GM12878 (cell line): ENCODE measurements at regions of chr4 and their contacts with region 1.

Region 1: DNA sequence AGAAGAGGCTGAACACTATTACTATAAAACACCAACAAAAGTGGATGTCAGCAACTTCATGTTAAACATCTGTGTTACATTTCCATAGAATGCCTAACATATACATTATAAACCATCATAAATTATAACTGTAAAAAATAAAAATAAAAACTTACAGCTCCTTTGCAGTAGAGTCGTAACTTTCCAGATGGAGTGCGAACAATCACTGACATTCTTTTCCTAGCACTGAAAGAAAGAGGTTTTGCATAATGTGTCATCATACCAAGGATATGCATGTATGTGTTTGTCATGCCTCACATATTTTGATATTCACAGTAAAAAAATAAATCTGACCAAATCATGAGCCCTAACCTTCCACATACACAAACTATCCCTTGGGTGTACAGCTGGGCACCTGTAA is 113.1 kb downstream of the ATP8A1 start:
- DNase-seq: no peak
- ATAC-seq: no peak
- H3K4me3 ChIP-seq: no peak overlapping the region
- H3K27ac ChIP-seq: no peak overlapping the region
- H3K4me1 ChIP-seq: no peaks in the 10 kb centered on the region
- H3K27me3 ChIP-seq: no peaks in the 10 kb centered on the region
- CTCF ChIP-seq: no peak
- EP300 ChIP-seq: no peak
- POLR2A ChIP-seq: no peak
- RAD21 ChIP-seq: no peak

Region 2: DNA sequence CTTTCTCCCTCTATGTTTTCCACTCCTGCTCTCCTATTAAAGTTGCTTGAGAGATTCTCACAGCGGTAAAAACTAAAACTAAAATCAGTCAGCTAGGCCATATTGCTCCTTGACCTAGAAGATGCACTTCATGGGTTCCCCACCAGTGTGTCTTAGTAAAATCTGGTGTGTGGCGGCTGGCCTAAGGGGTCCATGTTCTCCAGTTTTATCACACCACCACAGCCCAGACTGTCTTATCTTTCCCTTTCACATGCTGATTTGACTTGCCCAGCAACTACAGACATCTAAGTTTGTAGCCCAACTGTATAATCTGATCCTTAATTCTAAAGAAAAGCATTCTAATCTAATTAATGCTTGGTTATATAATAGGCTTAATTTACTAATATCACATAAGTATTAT is 45.1 kb after region 1 on chr4:
- CTCF ChIA-PET with region 1: no interaction called
- POLR2A ChIA-PET with region 1: no interaction called
- RAD21 ChIA-PET with region 1: no interaction called
- SMC1A ChIA-PET with region 1: no interaction called
- in situ Hi-C with region 1: no loop called
- intact Hi-C with region 1: no loop called
- DNase-seq: no peak
- ATAC-seq: no peak
- H3K4me3 ChIP-seq: no peak overlapping the region
- H3K27ac ChIP-seq: no peak overlapping the region
- H3K4me1 ChIP-seq: no peaks in the 10 kb centered on the region
- H3K27me3 ChIP-seq: no peaks in the 10 kb centered on the region
- CTCF ChIP-seq: no peak
- EP300 ChIP-seq: no peak
- POLR2A ChIP-seq: no peak
- RAD21 ChIP-seq: no peak

Region 3: GRCh38 chr4:43496188-43496587 is 952.4 kb after region 1 on chr4:
- CTCF ChIA-PET with region 1: no interaction called
- POLR2A ChIA-PET with region 1: interaction called, 10 read pairs
- RAD21 ChIA-PET with region 1: no interaction called
- SMC1A ChIA-PET with region 1: no interaction called
- in situ Hi-C with region 1: no loop called
- intact Hi-C with region 1: no loop called
- DNase-seq: no peak
- ATAC-seq: peak; percentile 72
- H3K4me3 ChIP-seq: no peak overlapping the region
- H3K27ac ChIP-seq: no peak overlapping the region
- H3K4me1 ChIP-seq: no peaks in the 10 kb centered on the region
- H3K27me3 ChIP-seq: no peaks in the 10 kb centered on the region
- CTCF ChIP-seq: no peak
- EP300 ChIP-seq: no peak
- POLR2A ChIP-seq: no peak
- RAD21 ChIP-seq: no peak